ENCODE measurements at regions of chr1 and their contacts with region 1.

Region 1: DNA sequence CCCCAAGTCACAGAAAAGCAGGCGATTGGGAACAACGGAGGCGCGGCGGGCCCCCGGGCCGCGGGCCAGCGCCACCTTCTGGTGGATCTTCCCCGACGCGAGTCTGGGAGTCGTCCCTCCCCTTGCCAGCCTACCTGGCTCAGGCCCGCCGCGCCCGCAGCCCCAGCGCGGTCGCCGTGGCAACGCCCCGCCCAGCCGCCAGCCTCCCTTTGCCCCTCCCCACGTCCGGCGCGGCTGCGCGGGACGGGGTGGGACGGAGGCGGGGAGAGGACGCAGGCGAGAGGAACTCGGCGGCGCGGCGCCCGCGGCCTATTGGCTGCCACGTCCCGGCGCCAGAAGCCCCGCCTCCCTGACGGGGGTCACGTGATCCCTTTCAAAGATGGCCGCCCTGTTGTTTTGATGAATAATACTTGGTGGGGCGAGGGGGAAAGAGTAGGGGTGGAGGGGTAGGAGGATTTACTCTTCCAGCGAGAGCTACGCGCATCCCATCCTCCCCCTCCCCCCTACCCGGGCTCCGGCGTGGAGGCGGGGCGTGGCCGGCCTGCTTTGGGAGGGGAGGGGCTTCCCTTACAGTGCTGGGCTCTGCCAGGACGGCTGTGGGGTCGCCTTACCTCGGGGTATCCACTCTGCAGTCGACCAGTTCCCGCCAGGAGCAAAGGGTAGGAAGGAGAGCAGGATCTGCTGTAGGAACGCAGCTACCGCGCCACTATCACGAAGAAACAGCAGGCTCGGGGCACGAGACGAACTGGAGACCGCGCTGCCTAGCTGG is at the start of gene UBE4B:
- DNase-seq: peak; percentile 98
- H3K4me3 ChIP-seq: peak within 1 kb of the TSS; percentile 98
- H3K27ac ChIP-seq: peak within 1 kb of the TSS; percentile 80
- H3K4me1 ChIP-seq: peaks cover 16% of the 10 kb centered on the region
- CTCF ChIP-seq: peak; percentile 84
- total RNA-seq, gene UBE4B: 19.7 and 21.5 TPM in 2 replicates

Region 2: GRCh38 chr1:10014016-10014415 is 18.8 kb before region 1 on chr1:
- CTCF ChIA-PET with region 1: no interaction called
- POLR2A ChIA-PET with region 1: no interaction called
- intact Hi-C with region 1: no loop called
- DNase-seq: no peak
- H3K4me3 ChIP-seq: no peak overlapping the region
- H3K27ac ChIP-seq: no peak overlapping the region
- H3K4me1 ChIP-seq: no peaks in the 10 kb centered on the region
- CTCF ChIP-seq: no peak

Region 3: DNA sequence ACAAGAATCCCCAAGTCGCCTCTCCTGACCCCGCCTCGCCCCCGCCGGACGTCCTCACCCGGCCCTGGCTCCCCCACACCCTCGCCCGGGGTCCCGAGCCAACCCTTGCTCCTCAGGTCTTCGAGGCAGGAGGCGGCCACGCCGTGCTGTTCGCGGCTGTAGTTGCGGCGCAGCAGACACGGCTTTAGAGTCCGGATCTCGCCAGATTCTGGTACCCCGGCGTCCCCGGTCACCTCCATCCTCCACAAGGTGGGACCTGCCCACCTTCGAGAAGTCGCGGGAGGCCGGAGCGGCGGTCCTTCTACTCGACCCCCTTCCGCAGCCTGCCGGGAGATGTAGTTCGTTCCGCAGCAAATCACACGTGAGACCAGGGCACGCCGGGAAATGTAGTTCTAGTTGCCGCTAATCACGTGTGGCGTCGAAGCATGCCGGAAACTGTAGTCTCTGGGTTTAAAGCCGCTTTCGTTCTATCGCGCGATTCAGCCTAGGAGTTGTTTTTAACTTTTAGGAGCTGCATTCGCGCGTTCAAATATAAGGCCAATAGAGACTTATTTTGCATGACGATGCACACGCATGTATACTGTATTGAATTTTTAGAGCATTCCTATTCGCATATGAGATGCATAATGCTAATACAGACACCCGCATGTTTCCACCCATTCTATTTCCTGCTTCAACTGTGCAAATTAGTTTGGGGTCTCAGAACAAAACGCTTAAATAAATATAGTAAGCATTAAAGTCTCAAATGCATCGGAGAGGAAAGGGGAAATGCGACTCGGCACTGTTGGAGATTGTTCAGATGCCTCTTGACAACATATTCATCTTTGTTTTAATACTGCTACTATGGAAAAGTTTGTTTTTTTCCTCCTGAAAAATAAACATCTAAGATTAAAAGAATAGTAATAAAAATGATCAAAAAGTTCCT is 439.7 kb after region 1 on chr1 and contains the start of gene DFFA:
- CTCF ChIA-PET with region 1: no interaction called
- POLR2A ChIA-PET with region 1: no interaction called
- intact Hi-C with region 1: loop called (anchors 10 kb)
- DNase-seq: peak; percentile 98
- H3K4me3 ChIP-seq: peak within 1 kb of the TSS; percentile 85
- H3K27ac ChIP-seq: peak within 1 kb of the TSS; percentile 96
- H3K4me1 ChIP-seq: peaks cover 32% of the 10 kb centered on the region
- CTCF ChIP-seq: 0 out of 2 replicates have a peak, but pooled peaks have one; percentile 13
- total RNA-seq, gene DFFA: 58.4 and 64.6 TPM in 2 replicates

Measured in OCI-LY7 (cell line).